Sigmoid colon (tissue), 7 donors: ENCODE measurements at regions of chr14 and their contacts with region 1.

Region 1: DNA sequence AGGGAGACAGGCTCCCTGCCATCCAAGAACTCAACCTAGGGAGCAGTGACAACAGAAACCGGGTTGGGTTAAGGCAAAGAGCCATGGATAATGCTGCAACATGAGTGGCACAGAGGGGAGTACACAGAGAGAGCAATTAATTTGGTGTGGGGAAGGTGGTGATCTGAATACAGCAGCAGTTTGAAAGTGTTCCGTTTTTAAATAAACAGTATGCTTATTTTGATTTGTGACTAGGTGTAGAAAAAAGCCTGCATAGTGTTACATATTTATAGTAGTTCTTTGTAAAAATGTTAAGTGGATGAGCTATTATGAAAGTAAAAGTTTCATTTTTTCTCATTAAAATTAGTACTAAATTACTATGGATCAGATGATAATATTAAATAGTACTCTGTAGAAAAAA is 8.7 kb downstream of the AKAP5 start:
- DNase-seq: no peak
- H3K4me3 ChIP-seq: no peak overlapping the region
- H3K27ac ChIP-seq: no peak overlapping the region
- H3K4me1 ChIP-seq: no peaks in the 10 kb centered on the region
- H3K27me3 ChIP-seq: no peaks in the 10 kb centered on the region
- CTCF ChIP-seq: no peak
- EP300 ChIP-seq: no peak
- POLR2A ChIP-seq: no peak

Region 2: DNA sequence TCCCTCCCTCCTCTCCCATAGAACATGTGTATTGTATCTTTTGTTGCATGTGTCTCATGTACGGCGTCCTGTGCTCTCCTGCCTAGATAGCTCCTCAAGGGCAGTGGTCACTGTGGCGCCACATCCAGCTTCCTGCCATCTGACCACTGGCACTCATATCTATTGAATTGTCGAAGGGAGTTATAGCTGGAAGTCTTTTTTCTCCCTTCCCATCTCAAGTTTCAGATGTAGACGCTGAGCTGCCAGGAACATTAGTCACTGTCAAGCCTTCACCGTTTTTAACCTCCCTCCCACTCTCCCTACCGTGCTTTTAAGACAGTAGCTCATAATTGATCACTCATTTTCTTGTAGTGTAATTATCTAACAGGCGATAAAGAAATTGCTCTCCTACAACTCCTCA is 52.9 kb before region 1 on chr14:
- intact Hi-C with region 1: loop called (anchors 5 kb)
- DNase-seq: no peak
- H3K4me3 ChIP-seq: no peak overlapping the region
- H3K27ac ChIP-seq: no peak overlapping the region
- H3K4me1 ChIP-seq: no peaks in the 10 kb centered on the region
- H3K27me3 ChIP-seq: no peaks in the 10 kb centered on the region
- CTCF ChIP-seq: no peak
- EP300 ChIP-seq: no peak
- POLR2A ChIP-seq: no peak